ENCODE measurements at regions of chrX and their contacts with region 1.

Region 1: DNA sequence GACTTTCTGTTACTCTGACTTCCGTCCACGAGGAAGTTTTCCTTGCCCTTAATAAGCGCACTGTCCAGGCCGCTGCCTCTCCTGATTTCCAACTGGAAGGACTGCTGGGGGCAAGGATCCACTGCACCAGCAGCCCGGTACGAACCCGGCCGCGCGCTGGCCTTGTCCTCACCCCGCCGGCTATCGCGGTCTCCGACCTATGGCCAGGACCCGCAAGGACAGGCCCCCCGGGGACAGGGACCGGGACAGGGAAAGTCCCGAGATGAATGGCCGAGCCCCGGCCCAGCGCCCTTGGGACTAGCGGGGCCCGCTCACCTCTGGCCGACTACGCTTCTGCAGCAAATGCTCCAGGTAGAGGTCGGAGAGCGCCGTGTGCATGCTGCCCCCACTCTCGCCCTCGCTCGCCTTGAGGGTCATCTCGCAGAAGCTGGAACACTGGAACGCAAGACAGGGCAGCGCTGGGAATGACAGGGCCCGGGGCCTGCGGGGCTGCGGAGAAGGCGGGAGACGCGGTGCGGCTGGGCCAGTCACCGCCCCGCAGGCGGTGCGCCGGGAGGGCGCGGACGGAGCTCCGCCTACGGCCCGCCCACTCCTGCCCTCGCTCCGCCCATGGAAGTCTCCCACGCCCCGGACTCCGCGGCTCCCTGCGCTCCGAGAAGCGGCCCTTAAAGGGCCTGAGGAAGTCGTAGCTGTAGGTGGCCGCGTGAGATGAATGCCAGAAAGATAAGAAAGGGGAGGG is at the start of gene MPP1:
- DNase-seq: peak; percentile 74 to 86 (median 77)
- ATAC-seq: peak; percentile 95 to 99 (median 99)
- H3K4me3 ChIP-seq: peak within 1 kb of the TSS; percentile 43 to 93 (median 69)
- H3K27ac ChIP-seq: peak within 1 kb of the TSS; percentile 1 to 88 (median 71)
- H3K4me1 ChIP-seq: peaks cover 0 to 15% (median 4%) of the 10 kb centered on the region in 12 donors
- H3K27me3 ChIP-seq: peaks cover 0 to 14% (median 0%) of the 10 kb centered on the region in 9 donors
- CTCF ChIP-seq: no peak
- POLR2A ChIP-seq: peak in 1 of 2 donors; percentile 64
- total RNA-seq, gene MPP1: 17.7 to 73.2 (median 39.1) TPM

Region 2: GRCh38 chrX:154762523-154763289 is 42.4 kb before region 1 on chrX and contains the start of gene DKC1:
- intact Hi-C with region 1: loop called in 2 of 10 experiments (anchors 2 kb)
- DNase-seq: peak; percentile 94 to 98 (median 97)
- ATAC-seq: peak; percentile 98 to 99 (median 98)
- H3K4me3 ChIP-seq: peak within 1 kb of the TSS; percentile 35 to 92 (median 72)
- H3K27ac ChIP-seq: peak within 1 kb of the TSS in 11 of 12 donors; percentile 50 to 77 (median 66)
- H3K4me1 ChIP-seq: peaks cover 0 to 15% (median 1%) of the 10 kb centered on the region in 12 donors
- H3K27me3 ChIP-seq: no peaks in the 10 kb centered on the region
- CTCF ChIP-seq: peak in 4 of 12 donors; percentile 19 to 24 (median 22)
- POLR2A ChIP-seq: peak in 1 of 2 donors; percentile 41
- total RNA-seq, gene DKC1: 12.9 to 31.0 (median 23.6) TPM